Right lobe of liver (tissue), 6 donors: ENCODE measurements at regions of chr2 and their contacts with region 1.

Region 1: DNA sequence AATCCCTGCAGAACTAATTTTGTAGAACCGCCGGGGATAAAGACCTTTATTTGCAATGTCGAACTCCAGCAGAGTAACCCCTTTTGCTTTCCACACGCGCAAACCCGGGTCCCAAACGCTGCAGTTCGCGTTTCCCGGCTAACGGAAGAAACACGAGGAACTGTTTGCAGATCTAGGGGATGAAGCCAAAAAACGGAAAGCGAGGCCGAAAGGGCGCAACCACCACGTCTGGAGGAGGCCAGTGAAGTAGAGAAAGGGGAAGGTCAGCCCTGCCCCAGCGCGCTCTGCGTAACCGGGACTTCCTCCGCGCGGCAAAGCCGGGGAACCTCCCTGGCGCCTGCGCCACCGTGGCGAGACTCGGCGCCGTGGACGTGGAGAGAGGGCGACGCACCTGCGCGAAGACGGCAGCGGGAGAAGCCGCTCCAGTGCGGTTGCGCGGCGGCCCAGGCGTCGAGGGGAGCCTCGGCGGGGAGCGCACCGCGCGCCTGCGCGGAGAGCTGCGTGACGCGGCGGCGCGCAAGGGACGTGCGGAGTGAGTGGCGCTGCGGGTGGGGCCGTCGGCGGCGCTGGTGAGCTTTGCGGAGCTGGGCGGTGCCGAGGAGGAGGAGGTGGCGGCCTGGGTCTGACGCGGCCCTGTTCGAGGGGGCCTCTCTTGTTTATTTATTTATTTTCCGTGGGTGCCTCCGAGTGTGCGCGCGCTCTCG is at the start of gene PPP1CB:
- DNase-seq: peak; percentile 98
- ATAC-seq: peak; percentile 88 to 95 (median 92)
- H3K4me3 ChIP-seq: peak within 1 kb of the TSS; percentile 77 to 92 (median 85)
- H3K27ac ChIP-seq: peak within 1 kb of the TSS; percentile 98 to 100 (median 99)
- H3K4me1 ChIP-seq: peaks cover 0 to 30% (median 7%) of the 10 kb centered on the region in 4 donors
- H3K27me3 ChIP-seq: no peaks in the 10 kb centered on the region
- CTCF ChIP-seq: peak; percentile 23 to 46 (median 41)
- POLR2A ChIP-seq: peak; percentile 88
- total RNA-seq, gene PPP1CB: 55.7 to 86.3 (median 71.4) TPM

Region 2: GRCh38 chr2:28193627-28194403 is 557.6 kb before region 1 on chr2:
- intact Hi-C with region 1: no loop called
- DNase-seq: no peak
- ATAC-seq: no peak
- H3K4me3 ChIP-seq: no peak overlapping the region
- H3K27ac ChIP-seq: no peak overlapping the region
- H3K4me1 ChIP-seq: no peaks in the 10 kb centered on the region
- H3K27me3 ChIP-seq: no peaks in the 10 kb centered on the region
- CTCF ChIP-seq: no peak
- POLR2A ChIP-seq: no peak

Region 3: DNA sequence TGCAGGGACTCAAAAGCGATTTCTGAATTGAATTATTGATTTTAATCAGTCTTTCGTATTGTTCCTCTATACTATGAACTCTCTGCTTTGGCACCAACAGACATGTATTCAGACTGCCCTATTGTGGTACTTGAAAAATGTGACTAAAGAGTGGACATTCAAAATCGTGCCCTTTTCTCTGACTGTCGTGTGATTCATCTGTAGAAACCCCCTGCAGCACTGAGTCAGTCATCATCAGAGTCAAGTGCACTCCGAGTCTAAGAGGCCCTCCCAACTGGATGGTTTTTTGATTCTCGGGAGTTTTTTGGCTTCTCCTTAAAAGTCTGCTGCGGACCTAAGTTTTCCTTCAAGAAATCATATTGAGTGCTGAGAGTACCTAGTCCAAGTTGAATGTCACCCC is 455.2 kb before region 1 on chr2:
- intact Hi-C with region 1: no loop called
- DNase-seq: no peak
- ATAC-seq: no peak
- H3K4me3 ChIP-seq: no peak overlapping the region
- H3K27ac ChIP-seq: no peak overlapping the region
- H3K4me1 ChIP-seq: no peaks in the 10 kb centered on the region
- H3K27me3 ChIP-seq: no peaks in the 10 kb centered on the region
- CTCF ChIP-seq: no peak
- POLR2A ChIP-seq: no peak

Region 4: GRCh38 chr2:28610583-28611201 is 140.7 kb before region 1 on chr2:
- intact Hi-C with region 1: loop called in 1 of 2 experiments (anchors 10 kb)
- DNase-seq: no peak
- ATAC-seq: peak in 1 of 4 donors; percentile 49
- H3K4me3 ChIP-seq: no peak overlapping the region
- H3K27ac ChIP-seq: no peak overlapping the region
- H3K4me1 ChIP-seq: no peaks in the 10 kb centered on the region
- H3K27me3 ChIP-seq: no peaks in the 10 kb centered on the region
- CTCF ChIP-seq: no peak
- POLR2A ChIP-seq: no peak

Region 5: DNA sequence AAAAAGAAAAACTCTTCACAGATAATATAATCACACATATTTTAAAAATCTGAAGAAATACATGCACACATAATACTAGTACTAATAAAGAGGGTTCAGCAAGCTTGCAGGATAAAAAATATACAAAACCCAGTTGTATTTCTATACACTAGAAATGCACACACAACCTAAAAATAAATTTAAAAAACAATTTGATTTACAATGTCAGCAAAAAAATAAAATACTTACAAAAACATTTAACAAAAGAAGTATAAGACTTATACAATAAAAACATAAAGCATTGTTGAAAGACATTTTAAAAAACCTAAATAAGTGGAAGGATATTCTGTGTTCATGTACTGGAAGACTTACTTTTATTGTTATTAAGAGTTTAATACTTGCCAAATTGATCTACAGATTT is 1251.7 kb after region 1 on chr2:
- intact Hi-C with region 1: no loop called
- DNase-seq: no peak
- ATAC-seq: no peak
- H3K4me3 ChIP-seq: no peak overlapping the region
- H3K27ac ChIP-seq: no peak overlapping the region
- H3K4me1 ChIP-seq: no peaks in the 10 kb centered on the region
- H3K27me3 ChIP-seq: no peaks in the 10 kb centered on the region
- CTCF ChIP-seq: no peak
- POLR2A ChIP-seq: no peak